Colonic mucosa (tissue), 4 donors: ENCODE measurements at regions of chr19 and their contacts with region 1.

Region 1: GRCh38 chr19:14395710-14396336 is 14.6 kb downstream of the ADGRE5 start:
- DNase-seq: no peak
- H3K4me3 ChIP-seq: no peak overlapping the region
- H3K27ac ChIP-seq: no peak overlapping the region
- H3K4me1 ChIP-seq: no peaks in the 10 kb centered on the region
- H3K27me3 ChIP-seq: no peaks in the 10 kb centered on the region
- CTCF ChIP-seq: no peak

Region 2: DNA sequence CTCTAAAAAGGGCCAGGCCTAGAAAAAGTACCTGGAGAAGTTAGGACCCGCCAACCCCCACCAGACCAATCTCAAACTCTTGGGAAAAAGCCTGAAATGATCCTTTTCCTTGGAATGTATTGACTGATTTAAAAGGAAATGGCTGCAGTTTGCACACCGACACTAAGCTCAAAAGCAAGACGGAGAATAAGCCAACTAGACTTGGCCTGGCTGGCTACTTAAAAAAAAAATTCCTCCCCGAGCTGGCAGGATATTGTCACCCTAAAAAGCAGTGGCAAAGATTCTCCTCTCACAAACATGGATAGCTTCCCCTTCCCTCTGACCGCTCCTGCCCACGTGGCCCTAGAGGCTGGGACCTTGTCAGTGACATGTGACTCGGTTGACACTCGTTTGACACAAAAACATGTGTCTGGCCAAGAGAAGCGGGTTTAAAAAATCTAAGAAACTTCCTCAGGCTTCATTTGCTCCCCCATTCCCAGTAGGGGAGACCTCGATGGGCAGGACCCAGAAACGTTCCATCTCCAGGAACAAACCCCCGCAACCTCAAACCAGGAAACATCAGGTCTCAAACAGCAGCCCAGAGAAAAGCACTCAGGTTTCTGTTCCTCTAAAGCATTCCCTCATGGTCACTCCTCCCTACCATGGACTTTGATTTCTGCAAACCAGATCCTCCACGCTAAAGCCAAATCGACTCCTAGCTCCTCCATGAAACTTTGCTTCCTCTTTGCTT is 391.0 kb before region 1 on chr19:
- intact Hi-C with region 1: no loop called
- DNase-seq: peak; percentile 77
- H3K4me3 ChIP-seq: peak overlapping the region; percentile 68
- H3K27ac ChIP-seq: peak overlapping the region; percentile 95
- H3K4me1 ChIP-seq: peaks cover 8% of the 10 kb centered on the region
- H3K27me3 ChIP-seq: no peaks in the 10 kb centered on the region
- CTCF ChIP-seq: no peak

Region 3: DNA sequence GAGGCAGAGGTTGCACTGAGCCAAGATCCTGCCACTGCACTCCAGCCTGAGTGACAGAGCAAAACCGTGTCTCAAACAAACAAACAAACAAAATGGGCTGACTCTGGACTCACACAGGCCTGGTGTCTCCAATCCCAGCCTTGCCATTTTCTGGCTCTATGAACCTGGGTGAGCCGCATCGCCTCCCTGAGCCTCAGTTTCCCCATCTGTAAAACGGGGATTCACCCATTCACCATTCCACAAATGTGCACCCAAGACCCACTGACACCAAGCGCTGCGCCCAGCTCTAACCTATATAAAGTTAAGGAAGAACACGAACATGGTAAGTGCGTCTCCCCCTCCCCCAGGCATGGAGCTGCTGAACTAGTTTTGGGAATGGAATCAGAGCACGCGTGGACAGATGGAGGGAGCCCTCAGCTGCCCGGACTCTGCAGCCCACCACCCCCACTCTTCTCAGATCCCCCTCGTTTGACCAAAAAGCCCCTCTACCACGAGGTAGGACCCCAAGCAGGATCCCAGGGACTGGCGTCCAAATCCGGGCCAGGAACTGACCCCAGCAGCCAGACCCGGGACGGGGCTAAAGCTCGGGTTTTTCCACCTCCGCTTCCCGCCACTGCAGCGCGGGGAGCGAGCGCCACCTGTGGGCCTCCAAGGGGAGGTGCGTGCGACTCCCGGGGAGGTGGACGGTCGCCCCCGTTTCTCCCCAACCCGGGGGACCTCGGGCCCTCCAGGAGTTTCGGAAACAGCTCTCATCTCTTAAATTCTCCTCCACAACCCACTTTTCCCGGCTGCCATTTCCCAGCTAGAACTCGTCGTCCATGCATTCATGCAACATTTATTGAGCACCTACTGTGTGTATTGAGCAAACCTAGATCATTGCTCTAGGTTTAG is 47.6 kb before region 1 on chr19:
- intact Hi-C with region 1: no loop called
- DNase-seq: peak; percentile 73
- H3K4me3 ChIP-seq: peak overlapping the region; percentile 3
- H3K27ac ChIP-seq: no peak overlapping the region
- H3K4me1 ChIP-seq: no peaks in the 10 kb centered on the region
- H3K27me3 ChIP-seq: no peaks in the 10 kb centered on the region
- CTCF ChIP-seq: peak; percentile 98

Region 4: DNA sequence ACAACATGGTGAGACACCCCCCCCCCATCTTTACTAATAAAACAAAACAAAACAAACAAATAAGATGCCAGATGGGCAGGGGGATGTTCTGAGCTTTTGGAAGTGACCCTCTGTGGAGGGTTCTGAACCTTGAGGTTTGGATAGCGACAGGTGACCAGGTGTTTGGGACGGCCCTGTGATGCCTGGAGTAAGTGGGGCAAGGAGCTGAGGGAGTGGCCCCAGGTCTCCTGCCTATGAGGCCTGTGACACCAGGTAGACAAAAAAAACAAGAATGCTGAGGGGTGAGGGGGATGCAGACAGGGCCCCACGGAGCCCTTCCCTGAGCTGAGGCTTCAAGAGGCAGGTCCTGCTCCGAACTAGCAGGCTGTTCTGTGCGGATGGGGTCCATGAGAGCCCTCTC is 373.4 kb after region 1 on chr19:
- intact Hi-C with region 1: loop called (anchors 5 kb)
- DNase-seq: no peak
- H3K4me3 ChIP-seq: no peak overlapping the region
- H3K27ac ChIP-seq: no peak overlapping the region
- H3K4me1 ChIP-seq: no peaks in the 10 kb centered on the region
- H3K27me3 ChIP-seq: no peaks in the 10 kb centered on the region
- CTCF ChIP-seq: no peak